ENCODE measurements at regions of chr1 and their contacts with region 1.

Region 1: DNA sequence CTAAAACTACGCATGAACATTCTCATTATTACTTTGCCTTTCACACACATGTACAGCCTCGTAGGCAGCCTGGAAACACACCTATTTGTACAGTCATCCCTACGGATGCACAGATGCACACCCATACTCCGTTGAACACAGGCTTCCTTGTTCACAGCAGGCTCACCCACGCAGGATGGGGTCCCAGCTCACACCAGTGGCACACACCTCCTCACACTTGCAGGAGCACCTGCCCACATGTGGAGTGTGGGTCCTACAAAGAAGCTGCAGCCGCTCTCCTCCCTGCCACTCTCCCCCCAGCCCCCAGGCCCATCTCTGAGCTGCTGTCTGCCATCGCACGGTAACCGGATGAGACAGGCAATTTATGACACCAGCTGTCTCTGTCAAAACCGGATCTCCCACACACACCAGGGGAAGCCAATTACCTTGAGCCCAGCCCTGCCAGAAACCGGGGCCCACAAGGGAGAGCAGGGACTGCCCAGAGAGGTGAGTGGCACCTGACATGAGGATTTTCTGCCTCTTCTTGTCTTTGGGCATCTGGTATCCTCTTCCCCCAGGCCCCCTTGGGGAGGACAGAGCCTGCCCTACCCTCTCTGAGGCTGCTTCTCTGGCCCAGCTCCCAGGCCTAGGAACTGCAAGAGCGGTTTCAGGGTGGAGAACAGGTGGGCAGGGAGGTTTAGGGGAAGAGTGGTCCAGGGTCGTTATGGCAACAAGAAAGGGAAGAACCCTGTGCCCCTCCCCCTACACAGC is 175.4 kb downstream of the IGSF21 start:
- DNase-seq: no peak
- ATAC-seq: no peak
- H3K4me3 ChIP-seq: no peak overlapping the region
- H3K27ac ChIP-seq: no peak overlapping the region
- H3K4me1 ChIP-seq: no peaks in the 10 kb centered on the region; the same call in 1 of the 2 replicates
- H3K27me3 ChIP-seq: peaks cover 17% of the 10 kb centered on the region
- CTCF ChIP-seq: no peak

Region 2: GRCh38 chr1:17831619-17832018 is 451.4 kb before region 1 on chr1:
- CTCF ChIA-PET with region 1: no interaction called
- POLR2A ChIA-PET with region 1: no interaction called
- in situ Hi-C with region 1: no loop called
- intact Hi-C with region 1: no loop called
- DNase-seq: no peak
- ATAC-seq: no peak
- H3K4me3 ChIP-seq: no peak overlapping the region
- H3K27ac ChIP-seq: no peak overlapping the region
- H3K4me1 ChIP-seq: no peaks in the 10 kb centered on the region
- H3K27me3 ChIP-seq: peaks cover 8% of the 10 kb centered on the region; the same call in 1 of the 2 replicates
- CTCF ChIP-seq: no peak

Region 3: DNA sequence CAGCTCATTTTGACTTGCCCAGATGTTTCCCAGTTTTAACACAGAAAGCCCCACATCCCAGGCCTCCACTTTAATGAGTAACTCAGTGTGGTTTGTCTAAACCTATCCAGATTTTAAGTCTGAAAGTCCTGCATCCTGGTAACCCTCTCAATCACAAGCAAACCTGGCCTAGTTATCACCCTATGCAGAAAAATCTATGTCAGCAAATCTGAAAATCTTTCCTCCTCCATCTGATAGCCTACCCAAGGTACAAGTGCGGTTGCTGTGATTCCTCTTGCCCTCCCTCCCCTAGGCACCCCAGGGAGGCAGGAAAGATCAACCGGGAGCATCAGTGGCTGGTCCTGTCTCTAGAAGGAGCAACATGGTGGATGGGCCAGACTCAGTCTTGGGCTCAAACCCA is 11.7 kb before region 1 on chr1:
- CTCF ChIA-PET with region 1: no interaction called
- POLR2A ChIA-PET with region 1: interaction called, 13 read pairs
- in situ Hi-C with region 1: no loop called
- intact Hi-C with region 1: no loop called
- DNase-seq: no peak
- ATAC-seq: no peak
- H3K4me3 ChIP-seq: no peak overlapping the region
- H3K27ac ChIP-seq: no peak overlapping the region
- H3K4me1 ChIP-seq: no peaks in the 10 kb centered on the region
- H3K27me3 ChIP-seq: no peaks in the 10 kb centered on the region; the same call in 1 of the 2 replicates
- CTCF ChIP-seq: no peak

Measured in Panc1 (cell line).